Posterior vena cava (tissue), 2 donors: ENCODE measurements at regions of chr1 and their contacts with region 1.

Region 1: DNA sequence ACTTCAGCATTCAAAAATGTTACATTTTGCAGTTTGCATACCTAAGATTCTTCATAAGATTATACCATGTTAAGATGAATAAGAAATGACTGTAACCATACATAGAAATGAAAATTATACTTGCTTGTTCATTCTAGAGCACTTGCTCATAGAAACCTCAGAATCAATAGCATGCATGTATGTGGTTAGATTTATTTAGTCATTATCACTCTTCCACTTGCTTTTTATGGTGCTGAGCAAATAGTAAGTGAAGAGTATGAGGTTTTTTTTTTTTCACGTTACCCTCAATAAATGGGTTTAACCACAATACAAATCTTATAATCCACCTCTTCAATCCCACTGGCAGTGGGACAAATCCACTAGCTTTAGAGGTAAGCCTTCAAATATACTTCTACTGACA is 84.7 kb downstream of the LRRC53 start:
- DNase-seq: no peak

Region 2: DNA sequence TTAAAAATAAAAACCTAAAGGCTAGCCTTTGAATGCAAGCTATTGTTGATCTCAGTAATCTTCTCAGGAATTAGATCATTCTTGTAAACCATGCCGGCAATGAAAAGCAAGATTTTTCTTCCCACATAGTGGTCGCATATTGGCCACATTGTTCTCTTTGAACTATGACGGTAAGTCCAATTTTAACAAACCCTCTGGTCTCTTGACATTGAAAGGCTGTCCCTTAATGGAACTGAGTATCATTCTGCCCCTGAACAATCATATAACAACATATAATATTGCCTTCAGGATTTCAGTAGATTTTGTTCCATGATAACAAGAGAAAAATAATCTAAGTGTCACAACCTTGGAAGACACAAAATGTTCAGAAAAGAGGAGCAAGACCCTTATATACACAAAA is 191.2 kb before region 1 on chr1:
- intact Hi-C with region 1: no loop called
- DNase-seq: no peak

Region 3: DNA sequence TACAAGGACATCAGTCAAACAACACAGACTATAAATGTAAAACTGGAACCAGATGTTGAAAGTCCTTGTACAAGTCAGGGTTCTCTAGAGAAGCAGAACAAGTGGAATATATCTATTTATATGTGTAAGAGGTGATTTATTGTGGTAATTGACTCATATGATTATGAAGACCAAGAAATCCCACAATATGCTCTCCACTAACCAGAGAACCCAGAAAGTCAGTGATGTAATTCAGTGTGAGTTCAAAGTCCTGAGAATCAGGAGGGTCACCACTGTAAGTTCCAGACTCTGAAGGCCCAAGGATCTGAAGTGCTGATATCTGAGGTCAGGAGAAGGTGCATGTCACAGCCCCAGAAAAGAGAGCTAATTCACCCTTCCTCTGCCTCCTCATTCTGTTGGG is 27.7 kb after region 1 on chr1:
- intact Hi-C with region 1: loop called in 1 of 2 experiments (anchors 2 kb)
- DNase-seq: no peak

Region 4: GRCh38 chr1:74652597-74653139 is 225.0 kb after region 1 on chr1:
- intact Hi-C with region 1: no loop called
- DNase-seq: no peak

Region 5: DNA sequence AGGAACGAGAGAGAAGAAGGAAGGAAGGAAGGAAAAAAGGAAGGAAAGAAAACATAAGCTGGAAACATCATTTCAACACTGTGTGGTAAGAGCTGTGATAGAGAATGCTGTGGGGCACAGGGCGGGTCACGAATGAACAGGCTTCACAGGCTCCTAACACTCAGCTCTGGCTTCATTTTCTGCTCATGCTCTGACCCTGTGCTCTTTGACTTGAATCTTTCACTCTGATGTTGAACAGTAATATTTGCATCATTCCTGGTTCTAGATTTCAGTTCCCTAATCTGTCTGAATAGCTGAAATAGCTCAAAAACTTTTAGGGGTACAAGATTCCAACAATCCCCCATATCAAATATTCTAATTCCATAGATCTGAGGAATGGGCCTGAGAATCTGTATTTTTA is 913.9 kb after region 1 on chr1:
- intact Hi-C with region 1: loop called in 1 of 2 experiments (anchors 10 kb)
- DNase-seq: no peak